Activated CD4-positive, alpha-beta T cell treated with anti-CD3 and anti-CD28 coated beads for 36 hours (primary cell): ENCODE measurements at regions of chr18 and their contacts with region 1.

Region 1: GRCh38 chr18:10878703-10879102 is 270.7 kb downstream of the PIEZO2 start:
- DNase-seq: no peak
- ATAC-seq: no peak
- H3K4me3 Mint-ChIP-seq: no peak overlapping the region
- H3K27ac Mint-ChIP-seq: no peak overlapping the region
- H3K4me1 Mint-ChIP-seq: no peaks in the 10 kb centered on the region
- H3K27me3 Mint-ChIP-seq: peaks cover 2% of the 10 kb centered on the region

Region 2: GRCh38 chr18:10750191-10751035 is 128.3 kb before region 1 on chr18:
- CTCF ChIA-PET with region 1: no interaction called
- POLR2A ChIA-PET with region 1: no interaction called
- intact Hi-C with region 1: no loop called
- DNase-seq: no peak
- ATAC-seq: no peak
- H3K4me3 Mint-ChIP-seq: no peak overlapping the region
- H3K27ac Mint-ChIP-seq: no peak overlapping the region
- H3K4me1 Mint-ChIP-seq: no peaks in the 10 kb centered on the region
- H3K27me3 Mint-ChIP-seq: peaks cover 3% of the 10 kb centered on the region

Region 3: GRCh38 chr18:10814336-10814735 is 64.4 kb before region 1 on chr18:
- CTCF ChIA-PET with region 1: no interaction called
- POLR2A ChIA-PET with region 1: no interaction called
- intact Hi-C with region 1: loop called in 1 of 2 experiments (anchors 10 kb)
- DNase-seq: no peak
- ATAC-seq: no peak
- H3K4me3 Mint-ChIP-seq: no peak overlapping the region
- H3K27ac Mint-ChIP-seq: no peak overlapping the region
- H3K4me1 Mint-ChIP-seq: no peaks in the 10 kb centered on the region
- H3K27me3 Mint-ChIP-seq: peaks cover 3% of the 10 kb centered on the region

Region 4: DNA sequence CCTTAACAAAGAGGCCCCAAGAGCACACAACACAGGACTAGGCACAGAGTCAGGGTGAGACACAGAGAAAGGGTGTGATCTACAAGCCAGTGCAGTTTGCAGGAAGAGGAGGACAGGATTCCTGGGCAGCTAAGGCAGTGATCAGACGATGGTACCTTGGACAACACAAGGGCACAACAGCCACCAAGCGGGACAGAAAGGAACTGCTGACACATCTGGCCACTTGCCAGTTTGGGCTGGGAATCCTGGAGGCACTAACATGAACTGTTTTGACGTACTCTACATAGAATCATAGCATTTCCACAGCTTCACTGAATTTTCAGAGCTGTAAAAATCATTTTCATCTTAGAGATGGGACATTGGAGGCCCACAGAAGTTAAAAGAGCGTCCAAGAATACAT is 509.2 kb after region 1 on chr18:
- CTCF ChIA-PET with region 1: no interaction called
- POLR2A ChIA-PET with region 1: no interaction called
- intact Hi-C with region 1: no loop called
- DNase-seq: peak; percentile 44
- ATAC-seq: no peak
- H3K4me3 Mint-ChIP-seq: no peak overlapping the region
- H3K27ac Mint-ChIP-seq: no peak overlapping the region
- H3K4me1 Mint-ChIP-seq: no peaks in the 10 kb centered on the region
- H3K27me3 Mint-ChIP-seq: no peaks in the 10 kb centered on the region